ENCODE measurements at regions of chr1 and their contacts with region 1.

Region 1: DNA sequence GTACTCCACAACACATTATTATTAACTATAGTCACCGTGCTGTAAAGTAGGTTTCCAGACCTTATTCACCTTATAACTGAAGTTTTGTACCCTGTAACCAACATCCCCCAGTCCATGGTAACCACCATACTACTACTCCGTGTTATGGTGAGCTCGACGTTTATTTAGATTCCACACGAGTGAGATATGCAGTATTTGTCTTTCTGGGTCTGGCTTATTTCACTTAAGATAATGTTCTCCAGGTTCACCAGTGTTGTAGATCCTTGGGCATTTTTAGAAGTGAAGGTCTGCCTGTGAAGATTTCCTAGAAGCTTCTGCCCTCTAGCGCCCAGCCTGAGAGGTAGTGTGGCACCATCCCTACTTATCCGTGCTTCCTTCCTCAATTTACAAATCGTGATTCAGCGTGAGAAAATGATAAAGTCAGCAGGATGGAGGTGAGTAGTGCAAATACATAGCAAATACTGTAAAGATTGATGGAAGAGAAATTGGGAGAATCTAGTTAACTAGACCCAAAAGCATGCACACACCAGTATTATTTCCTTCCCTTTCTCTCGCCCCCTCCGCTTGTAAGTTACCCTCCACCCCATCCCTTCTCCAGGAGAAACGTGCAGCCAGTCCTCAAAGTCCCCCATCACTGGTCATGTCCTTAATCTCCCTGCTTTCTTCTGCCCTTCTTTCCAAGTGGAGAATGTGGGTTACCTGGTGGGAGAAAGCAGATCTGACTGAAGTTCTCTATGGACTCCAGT is 36.0 kb upstream of the DISC1 start:
- DNase-seq: peak; percentile 49
- H3K4me3 ChIP-seq: no peak overlapping the region
- H3K27ac ChIP-seq: no peak overlapping the region
- H3K27me3 ChIP-seq: no peaks in the 10 kb centered on the region
- CTCF ChIP-seq: peak; percentile 91

Region 2: GRCh38 chr1:231337472-231338269 is 253.0 kb before region 1 on chr1 and contains the start of gene EXOC8:
- CTCF ChIA-PET with region 1: interaction called, 14 read pairs
- POLR2A ChIA-PET with region 1: interaction called, 3 read pairs
- DNase-seq: peak; percentile 94
- H3K4me3 ChIP-seq: peak within 1 kb of the TSS; percentile 99
- H3K27ac ChIP-seq: peak within 1 kb of the TSS; percentile 99
- H3K27me3 ChIP-seq: no peaks in the 10 kb centered on the region
- CTCF ChIP-seq: no peak
- polyA plus RNA-seq, gene EXOC8: 4.1 and 5.0 TPM in 2 replicates

Region 3: DNA sequence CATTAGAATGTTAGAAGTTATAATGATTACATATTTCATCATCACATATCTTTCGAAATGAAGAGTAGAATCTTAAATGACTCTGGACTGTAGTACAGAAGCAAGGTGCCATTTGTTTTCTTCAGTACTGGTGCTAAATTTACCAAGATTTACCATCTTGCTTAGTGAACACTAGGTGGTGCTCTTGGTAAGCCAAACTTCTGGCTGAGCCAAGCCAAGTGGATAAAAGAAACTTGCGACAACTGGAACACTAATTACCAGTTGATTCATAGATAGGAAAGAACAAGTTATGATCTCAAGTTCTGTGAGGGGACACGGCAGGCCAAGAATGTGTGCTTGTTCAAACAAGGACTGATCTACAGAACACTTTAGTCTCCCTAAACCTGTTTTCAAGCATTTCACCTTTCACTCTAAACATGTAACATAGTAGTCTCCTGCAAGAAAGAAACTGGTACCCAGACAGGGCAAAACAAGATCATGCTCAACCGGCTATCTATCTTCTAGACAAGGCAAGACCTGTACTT is 232.7 kb before region 1 on chr1:
- CTCF ChIA-PET with region 1: interaction called, 43 read pairs
- POLR2A ChIA-PET with region 1: no interaction called
- DNase-seq: no peak
- H3K4me3 ChIP-seq: no peak overlapping the region
- H3K27ac ChIP-seq: no peak overlapping the region
- H3K27me3 ChIP-seq: no peaks in the 10 kb centered on the region
- CTCF ChIP-seq: peak; percentile 80

Region 4: DNA sequence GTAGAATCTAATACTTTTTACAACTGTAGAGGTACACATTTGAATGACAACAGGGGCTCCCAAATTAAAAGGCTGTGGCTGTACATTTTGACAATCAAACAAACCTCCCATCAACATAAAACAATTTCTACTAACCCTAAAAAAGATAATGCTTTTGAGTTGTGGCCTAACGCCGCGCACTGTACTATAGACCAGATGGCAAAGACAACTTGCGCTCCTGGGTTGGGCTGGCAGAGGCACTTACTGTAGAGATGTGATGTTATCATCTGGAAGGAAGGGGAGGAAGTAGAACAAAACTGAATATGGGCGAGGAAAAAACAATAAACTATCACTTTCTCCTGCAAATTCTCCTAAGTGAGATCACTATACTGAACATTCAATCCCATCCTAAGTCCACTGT is 226.4 kb before region 1 on chr1:
- CTCF ChIA-PET with region 1: interaction called, 33 read pairs
- POLR2A ChIA-PET with region 1: no interaction called
- DNase-seq: no peak
- H3K4me3 ChIP-seq: no peak overlapping the region
- H3K27ac ChIP-seq: no peak overlapping the region
- H3K27me3 ChIP-seq: no peaks in the 10 kb centered on the region
- CTCF ChIP-seq: no peak

Region 5: GRCh38 chr1:231571904-231572303 is 18.7 kb before region 1 on chr1:
- CTCF ChIA-PET with region 1: interaction called, 13 read pairs
- POLR2A ChIA-PET with region 1: no interaction called
- DNase-seq: no peak
- H3K4me3 ChIP-seq: no peak overlapping the region
- H3K27ac ChIP-seq: no peak overlapping the region
- H3K27me3 ChIP-seq: no peaks in the 10 kb centered on the region
- CTCF ChIP-seq: no peak

Region 6: GRCh38 chr1:231603598-231604275 is 13.1 kb after region 1 on chr1:
- CTCF ChIA-PET with region 1: interaction called, 14 read pairs
- POLR2A ChIA-PET with region 1: no interaction called
- DNase-seq: no peak
- H3K4me3 ChIP-seq: peak overlapping the region; percentile 53
- H3K27ac ChIP-seq: no peak overlapping the region
- H3K27me3 ChIP-seq: no peaks in the 10 kb centered on the region
- CTCF ChIP-seq: peak; percentile 72

Region 7: GRCh38 chr1:231616667-231617066 is 26.0 kb after region 1 on chr1:
- CTCF ChIA-PET with region 1: interaction called, 10 read pairs
- POLR2A ChIA-PET with region 1: no interaction called
- DNase-seq: no peak
- H3K4me3 ChIP-seq: no peak overlapping the region
- H3K27ac ChIP-seq: no peak overlapping the region
- H3K27me3 ChIP-seq: no peaks in the 10 kb centered on the region
- CTCF ChIP-seq: no peak

Measured in AG04450 (cell line).